ENCODE measurements at regions of chr11 and their contacts with region 1.

Region 1: DNA sequence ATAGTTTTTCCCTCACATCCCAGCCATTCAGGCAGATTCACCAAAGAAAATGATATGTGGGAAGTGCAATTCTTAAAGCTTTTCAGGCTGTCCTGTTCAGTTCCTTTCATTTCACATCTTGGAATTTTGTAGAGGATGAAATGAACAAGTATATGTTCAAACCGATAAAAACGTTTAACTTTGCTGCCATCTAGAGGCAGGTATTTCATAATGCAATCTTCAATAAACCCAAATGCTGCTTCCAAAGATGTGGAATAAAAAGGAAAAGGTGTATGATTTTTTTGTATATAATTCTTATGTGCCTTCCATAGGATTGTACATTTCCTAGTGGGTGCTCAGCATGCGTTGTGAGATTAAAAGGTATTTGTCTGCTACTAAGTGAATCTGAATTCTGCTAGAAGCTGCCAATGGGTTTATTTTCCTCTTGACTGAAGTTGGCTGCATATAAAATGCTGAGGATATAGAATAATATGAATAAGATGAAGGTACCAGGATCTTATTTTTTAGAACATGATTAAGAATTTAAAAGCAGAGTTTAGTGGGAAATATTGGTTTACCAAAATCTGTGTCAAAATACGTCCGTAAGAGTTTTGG is 199.3 kb downstream of the PGR start:
- DNase-seq: no peak
- H3K4me3 ChIP-seq: no peak overlapping the region
- H3K27ac ChIP-seq: no peak overlapping the region
- H3K4me1 ChIP-seq: no peaks in the 10 kb centered on the region
- H3K27me3 ChIP-seq: no peaks in the 10 kb centered on the region
- CTCF ChIP-seq: peak; percentile 19 to 49 (median 49)
- EP300 ChIP-seq: no peak
- POLR2A ChIP-seq: no peak

Region 2: DNA sequence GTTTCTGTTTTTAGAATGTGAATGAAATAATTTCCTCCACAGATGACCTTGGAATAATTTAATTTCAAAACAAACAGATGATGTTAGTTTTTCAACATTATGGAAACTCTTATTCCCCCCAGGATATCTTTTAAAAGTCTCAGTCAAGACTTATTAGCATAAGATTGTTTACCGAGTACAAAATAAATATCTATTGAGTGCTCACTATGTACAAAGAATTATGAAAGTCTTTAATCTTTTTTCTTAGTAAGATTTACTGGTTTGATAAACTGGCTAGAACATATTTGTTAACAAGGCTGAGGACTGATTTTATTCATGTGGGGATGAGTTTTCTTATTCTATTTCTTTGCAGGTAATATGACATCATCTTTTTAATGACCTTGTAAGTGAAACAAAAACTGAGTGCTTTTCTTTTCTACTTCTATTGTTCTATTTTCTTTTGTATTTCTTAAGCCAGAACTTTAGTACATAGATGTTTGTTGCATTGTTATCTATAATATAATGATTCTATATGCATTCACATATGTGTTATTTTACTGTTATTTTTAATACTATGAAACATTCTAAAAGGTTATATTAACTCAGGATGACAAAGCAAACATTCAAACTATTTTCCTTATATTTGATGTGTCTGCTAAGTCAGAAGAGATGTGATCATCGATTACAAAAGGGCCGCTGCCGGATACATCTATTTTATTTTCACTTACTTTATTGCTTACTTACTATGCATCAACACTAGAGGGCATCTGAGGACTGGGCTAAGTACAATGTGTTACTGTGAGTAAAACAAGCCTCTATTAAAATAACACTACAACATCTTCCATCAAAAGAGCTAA is 354.2 kb before region 1 on chr11:
- intact Hi-C with region 1: loop called in 3 of 4 experiments (anchors 10 kb)
- DNase-seq: no peak
- H3K4me3 ChIP-seq: no peak overlapping the region
- H3K27ac ChIP-seq: no peak overlapping the region
- H3K4me1 ChIP-seq: no peaks in the 10 kb centered on the region
- H3K27me3 ChIP-seq: no peaks in the 10 kb centered on the region
- CTCF ChIP-seq: peak; percentile 44 to 66 (median 65)
- EP300 ChIP-seq: no peak
- POLR2A ChIP-seq: no peak

Region 3: GRCh38 chr11:100581318-100581717 is 349.0 kb before region 1 on chr11:
- intact Hi-C with region 1: loop called in 3 of 4 experiments (anchors 10 kb)
- DNase-seq: no peak
- H3K4me3 ChIP-seq: no peak overlapping the region
- H3K27ac ChIP-seq: no peak overlapping the region
- H3K4me1 ChIP-seq: no peaks in the 10 kb centered on the region
- H3K27me3 ChIP-seq: no peaks in the 10 kb centered on the region
- CTCF ChIP-seq: no peak
- EP300 ChIP-seq: no peak
- POLR2A ChIP-seq: no peak

Region 4: DNA sequence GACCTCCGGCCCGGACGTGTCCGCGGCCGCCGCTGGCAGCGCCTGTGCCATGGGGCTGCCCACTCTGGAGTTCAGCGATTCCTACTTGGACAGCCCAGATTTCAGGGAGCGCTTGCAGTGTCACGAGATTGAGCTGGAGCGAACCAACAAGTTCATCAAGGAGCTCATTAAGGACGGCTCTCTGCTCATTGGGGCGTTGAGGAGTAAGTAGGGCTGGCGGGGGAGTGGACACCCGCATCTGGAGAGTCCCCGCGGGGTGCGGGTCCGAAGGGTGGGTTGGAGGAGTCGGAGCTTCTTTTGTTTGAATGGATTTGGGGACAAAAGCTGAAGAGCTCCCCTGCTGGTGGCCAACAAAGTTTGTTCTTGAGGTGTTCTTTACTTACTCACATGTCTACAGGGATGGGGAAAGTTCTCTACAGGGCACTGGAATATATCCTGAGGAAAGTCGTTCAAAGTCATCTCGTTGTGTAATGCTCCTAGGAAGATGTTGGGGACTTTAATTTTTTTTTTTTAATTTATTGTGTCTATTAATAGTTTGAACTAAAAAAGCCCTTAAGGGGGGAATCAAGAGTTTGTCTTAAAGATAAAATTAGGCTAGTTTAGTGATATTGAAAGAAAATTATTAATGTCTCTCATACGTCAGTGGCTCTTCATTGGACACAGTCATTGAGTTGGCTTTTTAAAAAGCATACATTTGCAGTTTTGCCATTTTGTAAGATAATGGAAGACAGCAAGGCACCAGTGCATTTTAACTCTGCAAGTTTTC is 242.5 kb before region 1 on chr11:
- intact Hi-C with region 1: loop called in 3 of 4 experiments (anchors 2 to 10 kb)
- DNase-seq: peak; percentile 35 to 58 (median 53)
- H3K4me3 ChIP-seq: peak overlapping the region; percentile 39
- H3K27ac ChIP-seq: peak overlapping the region; percentile 57 to 70
- H3K4me1 ChIP-seq: peaks cover 2% of the 10 kb centered on the region
- H3K27me3 ChIP-seq: no peaks in the 10 kb centered on the region
- CTCF ChIP-seq: peak; percentile 35 to 45 (median 35)
- EP300 ChIP-seq: no peak
- POLR2A ChIP-seq: no peak

Measured in ovary (tissue), 10 donors.